Aorta (tissue), 5 donors: ENCODE measurements at regions of chr3 and their contacts with region 1.

Region 1: GRCh38 chr3:49839193-49839809 is 17.1 kb downstream of the TRAIP start:
- DNase-seq: peak; percentile 87 to 93
- ATAC-seq: peak; percentile 86
- H3K4me3 ChIP-seq: no peak overlapping the region
- H3K27ac ChIP-seq: peak overlapping the region in 1 of 2 donors; percentile 3
- H3K4me1 ChIP-seq: no peaks in the 10 kb centered on the region
- H3K27me3 ChIP-seq: no peaks in the 10 kb centered on the region

Region 2: GRCh38 chr3:49703443-49703927 is 135.8 kb before region 1 on chr3:
- intact Hi-C with region 1: loop called (anchors 5 to 10 kb)
- DNase-seq: peak; percentile 71 to 82
- ATAC-seq: peak; percentile 65
- H3K4me3 ChIP-seq: no peak overlapping the region
- H3K27ac ChIP-seq: no peak overlapping the region
- H3K4me1 ChIP-seq: no peaks in the 10 kb centered on the region
- H3K27me3 ChIP-seq: no peaks in the 10 kb centered on the region

Region 3: GRCh38 chr3:49775538-49775937 is 63.8 kb before region 1 on chr3:
- intact Hi-C with region 1: no loop called
- DNase-seq: no peak
- ATAC-seq: no peak
- H3K4me3 ChIP-seq: no peak overlapping the region
- H3K27ac ChIP-seq: no peak overlapping the region
- H3K4me1 ChIP-seq: no peaks in the 10 kb centered on the region
- H3K27me3 ChIP-seq: no peaks in the 10 kb centered on the region

Region 4: GRCh38 chr3:49802719-49803464 is 36.4 kb before region 1 on chr3 and contains the start of gene INKA1:
- intact Hi-C with region 1: loop called (anchors 1 to 2 kb)
- DNase-seq: peak; percentile 95 to 97
- ATAC-seq: peak; percentile 93
- H3K4me3 ChIP-seq: peak within 1 kb of the TSS; percentile 51 to 57
- H3K27ac ChIP-seq: peak within 1 kb of the TSS in 1 of 2 donors; percentile 77
- H3K4me1 ChIP-seq: no peaks in the 10 kb centered on the region
- H3K27me3 ChIP-seq: no peaks in the 10 kb centered on the region
- total RNA-seq, gene INKA1: 5.5 to 8.8 TPM

Region 5: DNA sequence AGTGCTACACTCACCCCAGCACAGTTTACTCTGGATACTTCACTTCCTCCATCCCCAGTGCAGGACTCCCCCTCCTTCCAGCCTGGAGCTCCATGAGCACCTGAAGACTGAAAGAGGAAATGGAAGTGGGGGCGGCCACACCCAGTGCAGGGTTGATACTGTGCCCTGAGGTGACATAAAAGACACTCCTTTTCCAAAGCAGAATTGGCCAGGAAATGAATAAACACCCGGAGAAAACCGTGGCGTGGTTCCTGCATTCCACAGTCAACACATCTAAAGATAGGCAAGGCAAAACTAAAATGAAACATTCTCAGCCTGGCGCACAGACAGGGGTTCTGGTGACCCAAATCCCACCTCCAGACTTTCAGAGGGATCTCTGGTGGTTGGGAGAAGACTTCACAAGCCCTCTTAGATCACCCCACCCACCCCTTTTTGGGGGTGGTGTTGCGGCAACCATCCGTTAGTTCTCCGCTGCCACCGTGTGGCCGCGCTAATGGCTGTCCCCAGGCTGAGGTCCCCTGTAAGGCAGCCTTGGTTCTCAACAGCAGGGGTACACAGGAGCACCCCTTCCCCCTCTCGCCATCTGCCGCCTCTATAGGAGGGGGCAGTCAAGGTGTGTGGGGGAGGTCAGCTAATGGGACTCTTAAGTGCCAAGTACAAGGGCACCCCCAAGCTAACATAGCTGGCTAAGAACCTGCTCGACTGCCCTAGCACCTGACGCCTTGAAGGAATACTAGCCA is 66.9 kb after region 1 on chr3:
- intact Hi-C with region 1: loop called in 1 of 2 experiments (anchors 2 kb)
- DNase-seq: peak; percentile 69 to 87
- ATAC-seq: peak; percentile 39
- H3K4me3 ChIP-seq: no peak overlapping the region
- H3K27ac ChIP-seq: peak overlapping the region in 1 of 2 donors; percentile 30
- H3K4me1 ChIP-seq: no peaks in the 10 kb centered on the region
- H3K27me3 ChIP-seq: no peaks in the 10 kb centered on the region